ENCODE measurements at regions of chr12 and their contacts with region 1.

Region 1: DNA sequence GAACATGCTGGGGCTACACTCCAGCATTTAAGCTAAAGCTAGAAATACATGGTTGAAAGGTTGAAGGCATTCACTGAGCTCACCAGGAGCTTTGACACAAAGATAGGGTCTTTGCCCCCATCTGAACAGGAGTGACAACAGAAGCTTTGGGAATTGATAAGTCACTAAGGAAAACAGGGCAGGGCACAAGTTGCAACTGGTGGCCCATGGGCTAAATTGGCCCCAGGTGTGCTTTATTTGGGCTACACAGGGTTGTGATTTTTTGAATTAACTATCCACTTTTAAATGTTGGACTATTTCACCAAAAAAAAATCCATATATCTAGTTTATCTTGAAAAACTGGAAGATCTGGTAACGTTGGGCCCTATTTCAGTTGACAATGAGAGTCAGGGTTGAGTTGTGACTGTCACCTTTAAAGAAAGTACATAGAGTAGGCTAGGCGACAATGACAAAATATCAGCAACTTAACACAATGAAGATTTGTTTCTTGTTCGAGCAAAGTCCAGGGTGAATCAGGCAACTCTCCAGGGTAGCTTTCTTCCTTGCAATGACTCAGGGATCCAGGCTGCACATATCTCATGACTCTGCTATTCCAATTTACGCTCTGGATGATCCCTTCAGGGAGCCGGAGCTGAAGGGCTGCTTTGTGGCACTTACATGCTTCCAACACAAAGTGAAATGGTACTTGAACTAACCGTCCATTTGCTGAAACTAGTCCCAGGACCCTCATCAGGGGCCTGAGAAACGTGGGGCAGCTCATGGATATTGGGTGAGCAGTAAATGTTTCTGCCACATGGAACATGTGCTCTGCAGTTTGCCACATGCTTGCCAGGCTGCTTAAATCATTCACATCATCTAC is 13.3 kb upstream of the EIF4B start:
- DNase-seq: peak; percentile 36

Region 2: GRCh38 chr12:52338241-52338960 is 654.5 kb before region 1 on chr12:
- intact Hi-C with region 1: loop called in 1 of 2 experiments (anchors 10 kb)
- DNase-seq: no peak

Region 3: DNA sequence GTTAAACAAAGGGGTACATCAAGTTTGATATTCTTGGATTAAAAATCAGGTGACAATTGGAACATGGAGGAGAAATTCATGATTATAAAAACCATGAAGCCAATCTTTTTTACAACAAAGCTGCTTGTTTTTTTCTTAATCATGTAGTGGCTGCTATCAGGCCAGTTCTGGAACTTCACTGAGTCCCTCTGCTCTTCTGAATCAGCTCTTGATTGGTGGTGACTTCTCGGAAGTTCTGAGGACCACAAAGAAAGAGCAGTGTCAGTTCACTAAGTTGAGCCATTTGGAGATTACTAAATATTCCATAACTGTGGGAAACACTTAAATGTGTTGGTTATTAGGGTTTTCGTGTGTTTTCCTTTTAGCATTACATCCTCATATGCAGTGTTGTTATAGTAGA is 21.8 kb after region 1 on chr12:
- intact Hi-C with region 1: no loop called
- DNase-seq: no peak